ENCODE measurements at regions of chr9 and their contacts with region 1.

Region 1: DNA sequence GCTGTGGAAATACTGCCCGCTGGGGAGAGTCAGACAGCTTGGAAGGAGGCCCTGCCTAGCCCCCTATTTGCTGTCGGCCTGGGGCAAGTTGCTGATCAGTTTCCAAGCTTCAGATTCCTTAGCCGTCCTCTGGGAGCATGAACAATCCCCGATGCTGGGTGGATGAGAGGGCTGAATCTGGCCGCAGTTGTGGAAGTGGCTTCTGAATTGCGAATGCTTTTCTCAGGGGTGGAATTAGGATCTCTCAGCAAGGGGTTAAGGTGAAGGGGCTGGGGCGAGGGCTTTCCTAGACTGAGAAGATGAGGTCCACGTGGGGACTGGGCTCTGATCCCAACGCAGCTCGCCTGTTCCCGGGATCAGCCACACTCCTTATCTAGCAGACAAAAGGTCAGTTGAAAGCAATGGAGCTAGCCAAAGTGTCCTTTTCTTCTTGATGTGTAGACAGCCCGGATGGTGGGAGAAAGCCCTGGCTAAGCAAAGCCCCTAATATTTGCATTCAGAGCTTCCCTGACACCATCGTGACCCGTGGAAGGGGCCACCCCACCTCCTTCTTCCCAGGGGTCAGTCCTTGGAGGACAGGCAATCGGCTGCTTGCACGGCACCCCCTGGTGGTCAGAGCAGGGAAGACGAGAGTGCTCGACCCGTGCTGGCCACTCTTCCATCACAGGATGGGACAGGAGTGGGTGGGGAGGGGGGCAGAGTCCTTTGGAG is 54.9 kb downstream of the COL15A1 start:
- DNase-seq: peak; percentile 39
- H3K4me3 Mint-ChIP-seq: no peak overlapping the region
- H3K27ac Mint-ChIP-seq: no peak overlapping the region
- H3K4me1 Mint-ChIP-seq: peaks cover 15% of the 10 kb centered on the region
- H3K27me3 Mint-ChIP-seq: peaks cover 16% of the 10 kb centered on the region

Region 2: GRCh38 chr9:98848450-98849149 is 150.0 kb before region 1 on chr9:
- intact Hi-C with region 1: loop called (anchors 1 kb)
- DNase-seq: peak; percentile 54
- H3K4me3 Mint-ChIP-seq: no peak overlapping the region
- H3K27ac Mint-ChIP-seq: no peak overlapping the region
- H3K4me1 Mint-ChIP-seq: peaks cover 7% of the 10 kb centered on the region
- H3K27me3 Mint-ChIP-seq: no peaks in the 10 kb centered on the region

Region 3: DNA sequence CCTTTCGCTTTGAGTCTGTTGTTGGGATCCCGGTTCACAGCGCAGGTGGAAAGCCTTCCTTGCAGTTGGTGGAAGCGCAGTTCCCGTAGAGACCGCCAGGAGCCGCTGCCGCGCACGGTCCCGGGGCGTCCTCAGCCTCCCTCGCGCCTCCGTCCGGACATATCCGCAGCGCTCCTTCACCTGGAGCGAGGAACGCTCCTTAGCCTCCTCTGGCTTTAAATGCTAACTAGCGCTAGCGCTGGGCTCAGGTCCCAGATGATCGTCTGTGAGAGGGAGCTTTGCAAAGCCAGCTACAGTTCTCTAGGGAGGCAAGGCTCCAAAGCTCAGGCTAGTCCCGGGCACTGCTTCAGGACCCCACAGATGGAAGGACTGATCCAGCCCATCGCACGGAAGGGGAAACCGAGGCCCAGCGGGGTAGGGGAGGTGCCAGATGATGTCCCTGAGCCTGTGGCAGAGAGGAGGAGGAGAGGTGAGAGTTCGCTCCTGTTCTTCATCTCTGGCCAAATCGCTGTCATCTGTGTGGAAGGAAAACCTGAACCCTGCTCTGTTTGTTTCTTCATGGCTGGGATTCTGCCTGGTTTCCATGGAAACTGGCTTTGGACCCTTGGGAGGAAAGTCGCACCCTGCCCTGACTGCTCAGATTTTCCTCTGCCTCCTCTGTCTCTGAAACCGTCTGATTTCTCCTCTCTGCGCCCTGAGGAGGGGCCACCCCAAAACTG is 23.4 kb before region 1 on chr9:
- intact Hi-C with region 1: loop called (anchors 2 kb)
- DNase-seq: peak; percentile 70
- H3K4me3 Mint-ChIP-seq: no peak overlapping the region
- H3K27ac Mint-ChIP-seq: no peak overlapping the region
- H3K4me1 Mint-ChIP-seq: peaks cover 11% of the 10 kb centered on the region
- H3K27me3 Mint-ChIP-seq: peaks cover 33% of the 10 kb centered on the region

Region 4: GRCh38 chr9:99012942-99013512 is 14.4 kb after region 1 on chr9:
- intact Hi-C with region 1: no loop called
- DNase-seq: no peak
- H3K4me3 Mint-ChIP-seq: no peak overlapping the region
- H3K27ac Mint-ChIP-seq: peak overlapping the region; percentile 70
- H3K4me1 Mint-ChIP-seq: peaks cover 11% of the 10 kb centered on the region
- H3K27me3 Mint-ChIP-seq: no peaks in the 10 kb centered on the region

Region 5: DNA sequence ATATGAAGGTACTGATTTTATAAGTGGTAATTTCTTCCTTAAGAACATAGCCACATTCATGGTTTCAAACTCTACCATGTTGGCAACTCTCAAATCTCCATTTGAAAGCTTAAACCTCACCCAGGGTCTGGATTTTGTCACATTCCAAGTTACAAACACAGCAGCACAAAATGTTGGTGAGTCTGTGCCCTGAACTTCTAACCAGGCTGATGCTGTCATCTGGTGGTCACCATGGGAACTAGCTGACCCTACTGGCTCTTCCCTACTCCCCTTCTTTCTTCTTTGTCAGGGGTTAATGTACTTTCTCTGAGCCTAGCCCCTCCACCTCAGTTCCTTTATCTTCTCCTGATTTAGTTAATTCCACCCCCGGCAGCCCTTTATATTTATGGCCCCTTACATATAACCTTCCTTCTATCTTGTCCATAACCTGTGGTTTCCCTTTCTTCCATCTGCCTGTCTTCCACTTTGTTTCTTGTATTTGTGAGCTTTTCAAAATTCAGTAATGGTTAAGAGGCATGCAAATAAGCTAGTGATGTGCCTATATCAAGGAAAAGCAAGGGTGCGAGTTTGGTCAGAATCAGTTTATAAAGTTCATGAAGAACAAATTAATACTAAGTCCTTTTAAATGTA is 142.2 kb after region 1 on chr9:
- intact Hi-C with region 1: loop called (anchors 1 kb)
- DNase-seq: no peak
- H3K4me3 Mint-ChIP-seq: no peak overlapping the region
- H3K27ac Mint-ChIP-seq: no peak overlapping the region
- H3K4me1 Mint-ChIP-seq: peaks cover 22% of the 10 kb centered on the region
- H3K27me3 Mint-ChIP-seq: no peaks in the 10 kb centered on the region